Motor neuron (in vitro differentiated cells): ENCODE measurements at regions of chr9 and their contacts with region 1.

Region 1: GRCh38 chr9:27033823-27034403 is 28.4 kb upstream of the LRRC19 start:
- ATAC-seq: peak in 4 of 8 experiments; percentile 30 to 72 (median 66)
- H3K4me3 ChIP-seq: no peak overlapping the region
- H3K27ac ChIP-seq: no peak overlapping the region
- H3K4me1 ChIP-seq: no peaks in the 10 kb centered on the region

Region 2: DNA sequence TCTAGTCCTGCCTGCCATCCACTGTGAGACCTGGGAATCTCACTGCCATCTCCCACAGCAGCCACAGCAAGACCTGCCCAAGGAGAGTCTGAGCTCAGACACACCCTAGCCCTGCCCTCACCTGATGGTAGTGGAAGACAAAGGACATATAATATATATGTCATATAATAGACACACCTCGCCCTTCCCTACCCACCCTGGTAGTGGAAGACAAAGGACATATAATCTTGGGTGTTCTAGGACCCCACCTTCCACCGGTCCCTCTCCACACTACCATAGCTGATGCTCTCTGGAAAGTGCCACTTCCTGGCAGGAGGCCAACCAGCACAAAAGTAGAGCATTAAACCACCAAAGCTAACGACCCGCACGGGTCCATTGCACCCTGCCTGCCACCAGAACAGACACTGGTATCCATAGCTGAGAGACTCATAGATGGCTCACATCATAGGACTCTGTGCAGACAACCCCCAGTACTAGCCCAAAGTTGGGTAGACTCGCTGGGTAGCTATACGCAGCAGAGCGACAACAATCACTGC is 686.9 kb before region 1 on chr9:
- in situ Hi-C with region 1: no loop called
- ATAC-seq: no peak
- H3K4me3 ChIP-seq: no peak overlapping the region
- H3K27ac ChIP-seq: no peak overlapping the region
- H3K4me1 ChIP-seq: no peaks in the 10 kb centered on the region

Region 3: GRCh38 chr9:27261517-27262211 is 227.8 kb after region 1 on chr9:
- in situ Hi-C with region 1: loop called in 1 of 9 experiments (anchors 25 kb)
- ATAC-seq: no peak
- H3K4me3 ChIP-seq: no peak overlapping the region
- H3K27ac ChIP-seq: no peak overlapping the region
- H3K4me1 ChIP-seq: no peaks in the 10 kb centered on the region

Region 4: GRCh38 chr9:27276193-27277030 is 242.5 kb after region 1 on chr9:
- in situ Hi-C with region 1: loop called in 3 of 9 experiments (anchors 10 to 25 kb)
- ATAC-seq: peak in 5 of 8 experiments; percentile 2 to 55 (median 44)
- H3K4me3 ChIP-seq: no peak overlapping the region
- H3K27ac ChIP-seq: no peak overlapping the region
- H3K4me1 ChIP-seq: no peaks in the 10 kb centered on the region